ENCODE measurements at regions of chr2 and their contacts with region 1.

Region 1: DNA sequence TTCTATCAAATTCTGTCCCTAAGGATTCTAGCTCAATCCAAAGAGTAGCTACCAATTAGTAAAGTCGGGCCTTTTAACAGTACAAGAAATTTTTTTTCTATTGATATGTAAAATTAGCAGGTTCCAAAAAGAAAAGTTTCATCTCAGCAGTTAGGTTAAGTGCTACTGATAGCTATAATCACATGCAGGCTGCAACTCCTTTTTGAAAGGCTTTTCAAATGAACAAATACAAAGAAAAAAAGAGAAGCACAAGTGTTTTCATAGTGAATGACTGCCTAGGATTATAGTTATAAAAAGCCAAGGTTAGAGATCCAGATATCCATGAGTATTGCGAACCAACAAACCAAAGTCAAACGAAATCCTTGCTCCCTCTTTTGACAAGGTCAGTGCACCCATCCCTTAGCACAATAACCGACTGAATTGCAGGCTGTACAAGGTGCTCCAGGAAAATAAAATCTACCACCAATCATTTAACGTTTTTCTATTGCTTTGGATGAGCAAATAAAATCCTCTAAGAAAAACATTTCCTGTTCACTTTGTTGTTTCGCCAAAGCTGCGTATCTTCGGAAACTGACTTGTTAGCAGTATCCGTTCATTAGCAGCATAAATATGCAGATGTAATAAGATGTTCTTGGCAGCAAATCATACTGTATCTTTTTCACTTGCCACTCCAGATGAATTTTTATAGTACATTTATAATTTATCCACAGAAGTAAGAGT is 100.2 kb downstream of the SRBD1 start:
- DNase-seq: peak; percentile 30
- H3K4me3 ChIP-seq: no peak overlapping the region
- H3K27ac ChIP-seq: peak overlapping the region; percentile 28
- H3K4me1 ChIP-seq: peaks cover 58% of the 10 kb centered on the region
- H3K27me3 ChIP-seq: no peaks in the 10 kb centered on the region
- CTCF ChIP-seq: no peak

Region 2: DNA sequence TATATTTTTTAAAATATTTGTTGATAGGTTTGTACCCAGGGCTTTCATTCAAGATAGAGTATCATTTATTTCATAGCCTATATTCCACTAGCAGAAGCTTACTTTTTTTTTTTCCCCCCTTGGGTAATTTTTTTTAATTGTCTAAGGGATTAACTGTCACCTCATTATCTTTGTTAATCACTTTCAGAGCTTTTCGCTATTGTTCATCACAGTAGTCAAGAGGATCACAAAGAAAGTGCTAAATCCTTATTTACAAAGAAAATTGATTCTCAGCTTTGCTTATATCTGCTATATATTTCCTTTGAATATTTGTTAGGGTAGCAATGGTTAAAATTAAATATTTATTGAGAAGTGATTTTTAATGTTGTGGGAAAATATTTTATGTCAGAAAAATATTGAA is 1090.1 kb before region 1 on chr2:
- CTCF ChIA-PET with region 1: no interaction called
- POLR2A ChIA-PET with region 1: no interaction called
- intact Hi-C with region 1: no loop called
- DNase-seq: no peak
- H3K4me3 ChIP-seq: no peak overlapping the region
- H3K27ac ChIP-seq: no peak overlapping the region
- H3K4me1 ChIP-seq: no peaks in the 10 kb centered on the region
- H3K27me3 ChIP-seq: no peaks in the 10 kb centered on the region
- CTCF ChIP-seq: no peak

Region 3: DNA sequence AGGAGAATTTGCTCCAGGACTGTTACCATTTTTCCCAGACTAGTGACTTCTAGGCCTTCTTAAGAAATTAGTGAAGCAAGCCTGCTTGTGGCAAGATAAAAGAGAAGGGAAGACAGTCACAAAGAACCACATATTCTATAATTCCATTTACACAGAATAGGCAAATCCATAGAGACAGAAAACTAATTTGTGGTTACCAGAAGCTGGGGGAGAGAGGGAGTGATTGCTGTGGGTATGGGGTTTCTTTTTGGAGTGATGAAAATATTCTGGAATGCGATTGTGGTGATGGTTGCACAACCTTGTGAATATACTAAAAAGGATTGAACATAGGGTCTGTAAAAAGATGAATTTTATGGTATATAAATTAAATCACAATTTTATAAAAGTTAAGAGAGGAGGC is 464.1 kb before region 1 on chr2:
- CTCF ChIA-PET with region 1: no interaction called
- POLR2A ChIA-PET with region 1: no interaction called
- intact Hi-C with region 1: no loop called
- DNase-seq: no peak
- H3K4me3 ChIP-seq: no peak overlapping the region
- H3K27ac ChIP-seq: no peak overlapping the region
- H3K4me1 ChIP-seq: no peaks in the 10 kb centered on the region
- H3K27me3 ChIP-seq: peaks cover 24% of the 10 kb centered on the region
- CTCF ChIP-seq: no peak

Region 4: GRCh38 chr2:45567974-45568789 is 57.3 kb after region 1 on chr2:
- CTCF ChIA-PET with region 1: no interaction called
- POLR2A ChIA-PET with region 1: no interaction called
- intact Hi-C with region 1: loop called (anchors 5 kb)
- DNase-seq: peak; percentile 96
- H3K4me3 ChIP-seq: peak overlapping the region; percentile 42
- H3K27ac ChIP-seq: peak overlapping the region; percentile 92
- H3K4me1 ChIP-seq: peaks cover 36% of the 10 kb centered on the region
- H3K27me3 ChIP-seq: no peaks in the 10 kb centered on the region
- CTCF ChIP-seq: no peak

Region 5: GRCh38 chr2:45650851-45651414 is 140.1 kb after region 1 on chr2:
- CTCF ChIA-PET with region 1: no interaction called
- POLR2A ChIA-PET with region 1: no interaction called
- intact Hi-C with region 1: no loop called
- DNase-seq: peak; percentile 94
- H3K4me3 ChIP-seq: peak overlapping the region; percentile 73
- H3K27ac ChIP-seq: no peak overlapping the region
- H3K4me1 ChIP-seq: peaks cover 19% of the 10 kb centered on the region
- H3K27me3 ChIP-seq: peaks cover 44% of the 10 kb centered on the region
- CTCF ChIP-seq: peak; percentile 55

Measured in A673 (cell line).